CD4-positive, alpha-beta T cell (primary cell): ENCODE measurements at regions of chr7 and their contacts with region 1.

Region 1: GRCh38 chr7:50092579-50093491 is at the start of gene ZPBP:
- DNase-seq: peak in 11 of 14 experiments; percentile 25 to 83 (median 44)
- ATAC-seq: peak; percentile 82
- H3K4me3 ChIP-seq: peak within 1 kb of the TSS; percentile 67
- H3K4me3 Mint-ChIP-seq: peak within 1 kb of the TSS; percentile 89
- H3K27ac ChIP-seq: peak within 1 kb of the TSS in 1 of 2 donors; percentile 65
- H3K27ac Mint-ChIP-seq: peak within 1 kb of the TSS; percentile 78
- H3K4me1 ChIP-seq: peaks cover 7% of the 10 kb centered on the region
- H3K4me1 Mint-ChIP-seq: peaks cover 8% of the 10 kb centered on the region
- H3K27me3 ChIP-seq: no peaks in the 10 kb centered on the region
- H3K27me3 Mint-ChIP-seq: no peaks in the 10 kb centered on the region
- CTCF ChIP-seq: peak; percentile 97
- total RNA-seq, gene ZPBP: not detected

Region 2: GRCh38 chr7:50418086-50418515 is 325.3 kb after region 1 on chr7:
- CTCF ChIA-PET with region 1: interaction called, 13 read pairs
- POLR2A ChIA-PET with region 1: interaction called, 5 read pairs
- intact Hi-C with region 1: loop called (anchors 1 to 2 kb)
- DNase-seq: peak; percentile 50 to 86 (median 62)
- ATAC-seq: peak; percentile 91
- H3K4me3 ChIP-seq: no peak overlapping the region
- H3K4me3 Mint-ChIP-seq: no peak overlapping the region
- H3K27ac ChIP-seq: no peak overlapping the region
- H3K27ac Mint-ChIP-seq: no peak overlapping the region
- H3K4me1 ChIP-seq: peaks cover 28% of the 10 kb centered on the region
- H3K4me1 Mint-ChIP-seq: peaks cover 31% of the 10 kb centered on the region
- H3K27me3 ChIP-seq: no peaks in the 10 kb centered on the region
- H3K27me3 Mint-ChIP-seq: no peaks in the 10 kb centered on the region
- CTCF ChIP-seq: peak; percentile 96

Region 3: GRCh38 chr7:50610521-50611277 is 517.9 kb after region 1 on chr7:
- CTCF ChIA-PET with region 1: interaction called, 3 read pairs
- POLR2A ChIA-PET with region 1: no interaction called
- intact Hi-C with region 1: loop called in 1 of 2 experiments (anchors 5 kb)
- DNase-seq: peak in 10 of 14 experiments; percentile 16 to 90 (median 48)
- ATAC-seq: peak; percentile 87
- H3K4me3 ChIP-seq: no peak overlapping the region
- H3K4me3 Mint-ChIP-seq: no peak overlapping the region
- H3K27ac ChIP-seq: peak overlapping the region in 1 of 2 donors; percentile 28
- H3K27ac Mint-ChIP-seq: peak overlapping the region; percentile 65
- H3K4me1 ChIP-seq: peaks cover 43% of the 10 kb centered on the region
- H3K4me1 Mint-ChIP-seq: peaks cover 34% of the 10 kb centered on the region
- H3K27me3 ChIP-seq: no peaks in the 10 kb centered on the region
- H3K27me3 Mint-ChIP-seq: no peaks in the 10 kb centered on the region
- CTCF ChIP-seq: no peak

Region 4: DNA sequence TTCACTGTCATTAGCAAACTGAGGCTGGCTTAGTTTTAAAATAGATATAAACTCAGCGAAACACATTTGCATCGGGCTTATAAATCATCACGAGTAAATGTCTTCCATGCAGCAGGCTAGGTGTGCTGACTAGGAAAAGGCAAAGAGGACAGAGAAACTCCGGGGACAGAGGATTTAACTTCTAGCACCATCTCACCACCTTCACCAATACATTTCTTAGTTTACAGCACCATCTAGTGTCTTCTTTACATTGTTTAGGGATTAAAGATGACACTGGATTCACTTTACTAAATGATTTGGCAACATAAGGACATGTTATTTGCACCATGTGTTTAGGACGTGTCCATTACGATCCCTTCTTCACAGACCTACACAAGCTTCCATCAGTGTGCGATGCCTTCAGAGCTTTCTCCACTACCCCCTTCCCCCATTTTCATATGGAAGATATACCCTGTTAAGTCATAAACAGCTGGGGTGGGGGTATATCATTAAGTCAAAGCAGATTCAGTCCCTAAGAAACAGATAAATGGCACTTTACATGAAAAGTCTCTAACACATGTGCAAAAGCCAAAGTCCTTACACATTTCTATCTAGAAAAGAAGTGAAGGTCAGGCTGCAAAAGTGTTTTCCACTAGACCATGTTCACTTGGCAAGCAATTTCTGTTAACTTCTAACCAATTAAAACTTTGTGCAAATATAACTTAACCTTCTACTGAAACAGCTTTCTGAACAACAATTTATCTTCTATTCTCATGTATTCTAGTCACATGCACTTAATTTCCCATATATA is 586.6 kb after region 1 on chr7:
- CTCF ChIA-PET with region 1: interaction called, 3 read pairs
- POLR2A ChIA-PET with region 1: interaction called, 3 read pairs
- intact Hi-C with region 1: loop called (anchors 1 to 2 kb)
- DNase-seq: peak in 3 of 14 experiments; percentile 69 to 72 (median 71)
- ATAC-seq: peak; percentile 69
- H3K4me3 ChIP-seq: no peak overlapping the region
- H3K4me3 Mint-ChIP-seq: no peak overlapping the region
- H3K27ac ChIP-seq: no peak overlapping the region
- H3K27ac Mint-ChIP-seq: no peak overlapping the region
- H3K4me1 ChIP-seq: no peaks in the 10 kb centered on the region
- H3K4me1 Mint-ChIP-seq: no peaks in the 10 kb centered on the region
- H3K27me3 ChIP-seq: no peaks in the 10 kb centered on the region
- H3K27me3 Mint-ChIP-seq: no peaks in the 10 kb centered on the region
- CTCF ChIP-seq: peak; percentile 79

Region 5: GRCh38 chr7:51162724-51163329 is 1070.0 kb after region 1 on chr7:
- CTCF ChIA-PET with region 1: interaction called, 16 read pairs
- POLR2A ChIA-PET with region 1: interaction called, 5 read pairs
- intact Hi-C with region 1: loop called (anchors 1 to 2 kb)
- DNase-seq: peak; percentile 30 to 73 (median 48)
- ATAC-seq: peak; percentile 71
- H3K4me3 ChIP-seq: no peak overlapping the region
- H3K4me3 Mint-ChIP-seq: no peak overlapping the region
- H3K27ac ChIP-seq: no peak overlapping the region
- H3K27ac Mint-ChIP-seq: no peak overlapping the region
- H3K4me1 ChIP-seq: no peaks in the 10 kb centered on the region
- H3K4me1 Mint-ChIP-seq: peaks cover 4% of the 10 kb centered on the region
- H3K27me3 ChIP-seq: peaks cover 0 to 4% of the 10 kb centered on the region in 2 experiments
- H3K27me3 Mint-ChIP-seq: peaks cover 32% of the 10 kb centered on the region
- CTCF ChIP-seq: peak; percentile 77